Mammary epithelial cell (primary cell): ENCODE measurements at regions of chr6 and their contacts with region 1.

Region 1: GRCh38 chr6:40907198-40907704 is 131.8 kb downstream of the UNC5CL start:
- DNase-seq: peak; percentile 81
- H3K4me3 ChIP-seq: no peak overlapping the region
- H3K27ac ChIP-seq: peak overlapping the region; percentile 8
- H3K4me1 ChIP-seq: peaks cover 35% of the 10 kb centered on the region
- H3K27me3 ChIP-seq: no peaks in the 10 kb centered on the region
- CTCF ChIP-seq: no peak

Region 2: GRCh38 chr6:40957616-40958492 is 50.6 kb after region 1 on chr6:
- CTCF ChIA-PET with region 1: no interaction called
- dilution Hi-C with region 1: no loop called
- in situ Hi-C with region 1: loop called in 1 of 2 experiments (anchors 5 kb)
- intact Hi-C with region 1: loop called (anchors 2 kb)
- DNase-seq: peak; percentile 81
- H3K4me3 ChIP-seq: no peak overlapping the region
- H3K27ac ChIP-seq: peak overlapping the region; percentile 52
- H3K4me1 ChIP-seq: peaks cover 51% of the 10 kb centered on the region
- H3K27me3 ChIP-seq: no peaks in the 10 kb centered on the region
- CTCF ChIP-seq: no peak

Region 3: DNA sequence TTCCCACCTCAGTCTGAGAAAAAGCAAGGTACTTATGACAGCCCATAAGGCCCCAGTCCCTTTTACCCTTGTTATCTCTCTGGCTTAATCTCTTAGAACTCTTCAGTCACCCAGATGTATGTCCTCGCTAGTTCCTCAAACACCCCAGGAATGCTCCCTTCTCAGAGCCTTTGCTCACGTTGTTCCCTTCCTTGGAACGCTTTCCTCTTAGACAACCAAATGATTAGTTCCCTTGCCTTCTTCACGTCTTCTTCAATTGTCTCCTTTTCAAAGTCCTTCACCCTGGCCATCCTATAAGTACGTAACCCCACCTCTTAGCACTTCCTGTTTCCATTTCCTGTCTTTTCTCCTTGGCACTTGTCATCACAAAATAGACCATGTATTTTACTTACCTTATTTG is 144.6 kb after region 1 on chr6:
- CTCF ChIA-PET with region 1: no interaction called
- dilution Hi-C with region 1: loop called (anchors 10 kb)
- in situ Hi-C with region 1: no loop called
- intact Hi-C with region 1: no loop called
- DNase-seq: no peak
- H3K4me3 ChIP-seq: no peak overlapping the region
- H3K27ac ChIP-seq: no peak overlapping the region
- H3K4me1 ChIP-seq: peaks cover 6% of the 10 kb centered on the region
- H3K27me3 ChIP-seq: no peaks in the 10 kb centered on the region
- CTCF ChIP-seq: no peak